GM10248 (cell line): ENCODE measurements at regions of chr15 and their contacts with region 1.

Region 1: DNA sequence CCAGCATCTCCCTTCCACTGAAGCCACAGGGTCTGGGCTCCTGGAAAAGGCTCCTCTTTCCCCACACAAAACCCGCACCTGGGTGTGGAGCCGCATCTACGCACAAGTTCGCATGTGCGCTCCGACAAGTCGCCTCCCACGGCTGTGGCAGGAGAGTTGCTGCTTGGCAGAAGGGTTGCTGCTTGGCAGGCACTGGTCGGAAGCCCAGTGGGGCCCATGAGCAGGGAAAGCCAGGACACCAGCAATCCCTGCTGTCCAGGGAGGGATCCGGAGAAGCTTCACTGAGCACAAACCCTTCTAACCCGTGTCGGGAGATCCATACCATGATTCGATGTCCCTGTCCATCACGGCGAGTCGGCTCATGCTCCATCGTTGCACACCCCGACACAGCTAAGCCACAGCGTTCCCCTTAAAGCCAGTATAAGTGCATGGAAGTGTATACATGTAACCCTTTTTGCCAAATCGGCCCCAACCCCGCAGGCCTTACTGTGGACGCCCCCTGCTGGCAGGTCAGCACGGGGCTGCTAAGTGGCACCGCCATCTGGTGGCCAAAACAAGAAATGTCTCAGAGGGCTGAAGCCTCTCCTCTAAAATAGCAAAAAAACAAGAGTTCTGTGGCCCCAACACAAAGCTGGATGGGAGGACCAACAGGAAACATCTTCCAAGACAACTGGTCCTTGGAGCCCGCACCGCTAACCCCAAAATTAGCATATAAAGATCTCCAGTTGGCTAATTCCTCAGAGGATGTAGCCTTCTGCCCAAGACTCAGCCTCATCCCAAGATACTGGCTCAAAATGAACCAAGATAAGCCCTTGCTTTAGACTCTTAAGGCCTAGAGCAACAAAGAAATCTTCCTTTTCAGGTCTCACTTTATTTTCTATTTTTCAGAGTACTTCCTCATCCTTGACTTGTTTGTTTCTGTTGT is 8.3 kb downstream of the ANKRD63 start:
- DNase-seq: peak; percentile 86
- CTCF ChIP-seq: peak; percentile 100

Region 2: DNA sequence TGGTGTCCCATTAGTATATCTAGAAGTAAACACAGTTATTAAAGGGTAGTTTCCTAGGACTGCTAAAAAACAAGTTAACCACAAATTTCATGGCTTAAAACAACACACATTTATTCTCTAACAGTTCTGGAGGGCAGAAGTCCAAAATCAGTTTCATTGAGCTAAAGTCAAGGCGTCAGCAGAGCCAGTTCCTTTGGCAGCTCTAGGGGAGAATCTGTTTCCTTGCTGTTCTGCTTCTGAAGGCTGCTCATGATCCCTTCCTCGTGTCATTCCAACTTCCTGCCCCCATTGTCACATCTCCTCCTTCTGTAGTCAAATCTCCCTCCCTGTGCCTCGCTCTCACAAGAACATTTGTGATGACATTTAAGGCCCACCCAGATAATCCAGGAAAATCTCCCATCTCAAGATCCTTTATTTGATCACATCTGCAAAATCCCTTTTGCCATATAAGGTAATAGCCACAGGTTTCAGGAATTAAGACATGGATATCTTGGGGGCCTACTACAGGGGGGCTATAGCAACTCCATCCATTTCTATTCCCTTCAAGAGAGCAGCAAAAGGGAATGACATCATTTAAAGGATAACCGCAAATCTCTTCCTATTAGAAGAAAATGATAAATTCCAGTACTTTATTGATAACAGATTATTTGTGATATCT is 404.6 kb before region 1 on chr15:
- CTCF ChIA-PET with region 1: no interaction called
- POLR2A ChIA-PET with region 1: no interaction called
- DNase-seq: no peak
- CTCF ChIP-seq: no peak

Region 3: GRCh38 chr15:40029979-40030893 is 244.4 kb before region 1 on chr15:
- CTCF ChIA-PET with region 1: interaction called, 21 read pairs
- POLR2A ChIA-PET with region 1: no interaction called
- DNase-seq: no peak
- CTCF ChIP-seq: peak; percentile 45

Region 4: DNA sequence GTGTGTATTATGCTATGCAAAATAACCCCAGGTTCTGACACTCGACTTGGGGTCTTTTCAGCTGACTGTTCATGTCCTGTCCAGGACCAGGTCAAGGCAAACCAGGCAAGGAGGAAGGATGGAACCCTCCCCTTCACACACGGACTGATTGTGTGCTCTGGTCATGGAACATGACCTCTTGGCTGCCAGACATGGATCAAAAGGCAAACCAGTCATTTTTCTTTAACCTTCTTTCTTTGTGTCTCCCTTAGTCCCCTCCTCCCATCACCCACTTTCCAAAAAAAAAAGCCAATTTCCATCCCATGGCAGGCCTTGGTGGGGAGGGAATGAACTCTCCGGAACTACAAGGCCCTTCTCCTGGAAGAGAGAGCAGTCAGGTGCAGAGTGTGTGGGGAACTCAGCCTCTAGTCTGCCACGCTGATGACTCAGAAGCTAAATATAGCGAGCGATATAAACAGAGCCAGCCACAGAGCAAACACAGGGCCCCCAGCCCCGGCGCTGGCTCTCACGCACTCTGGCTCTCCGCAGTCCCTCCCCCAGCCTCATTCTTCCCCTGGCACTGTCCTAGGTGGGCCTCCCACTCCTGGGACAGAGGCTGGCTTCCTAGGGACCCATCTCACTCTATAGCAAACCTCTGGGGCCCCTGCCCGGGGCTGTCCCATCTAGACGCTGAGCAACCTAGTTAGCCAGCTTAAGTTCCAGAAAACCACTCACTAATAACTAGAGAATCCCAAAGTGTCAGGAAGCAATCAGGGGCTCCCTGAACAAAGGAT is 175.9 kb before region 1 on chr15:
- CTCF ChIA-PET with region 1: interaction called, 11 read pairs
- POLR2A ChIA-PET with region 1: no interaction called
- DNase-seq: peak; percentile 88
- CTCF ChIP-seq: no peak

Region 5: DNA sequence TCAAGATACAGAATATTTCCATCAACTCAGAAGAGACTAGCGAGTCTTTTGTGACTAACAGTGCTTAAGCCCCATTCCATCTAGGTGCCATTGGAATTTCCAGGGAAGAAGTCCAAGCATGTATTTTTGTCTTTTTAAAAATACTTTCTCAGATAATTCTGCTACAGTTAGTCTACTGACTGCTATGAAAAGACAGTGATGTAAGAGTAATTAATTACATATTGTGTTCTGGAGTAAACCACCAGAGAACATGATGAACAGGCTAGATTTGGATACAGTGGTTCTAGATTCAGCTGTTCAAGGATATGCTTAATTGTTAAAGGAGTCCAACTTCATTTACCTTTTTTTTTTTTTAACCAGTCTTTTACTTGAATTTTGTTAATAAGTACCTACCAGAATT is 70.5 kb before region 1 on chr15:
- CTCF ChIA-PET with region 1: interaction called, 36 read pairs
- POLR2A ChIA-PET with region 1: no interaction called
- DNase-seq: no peak
- CTCF ChIP-seq: no peak

Region 6: DNA sequence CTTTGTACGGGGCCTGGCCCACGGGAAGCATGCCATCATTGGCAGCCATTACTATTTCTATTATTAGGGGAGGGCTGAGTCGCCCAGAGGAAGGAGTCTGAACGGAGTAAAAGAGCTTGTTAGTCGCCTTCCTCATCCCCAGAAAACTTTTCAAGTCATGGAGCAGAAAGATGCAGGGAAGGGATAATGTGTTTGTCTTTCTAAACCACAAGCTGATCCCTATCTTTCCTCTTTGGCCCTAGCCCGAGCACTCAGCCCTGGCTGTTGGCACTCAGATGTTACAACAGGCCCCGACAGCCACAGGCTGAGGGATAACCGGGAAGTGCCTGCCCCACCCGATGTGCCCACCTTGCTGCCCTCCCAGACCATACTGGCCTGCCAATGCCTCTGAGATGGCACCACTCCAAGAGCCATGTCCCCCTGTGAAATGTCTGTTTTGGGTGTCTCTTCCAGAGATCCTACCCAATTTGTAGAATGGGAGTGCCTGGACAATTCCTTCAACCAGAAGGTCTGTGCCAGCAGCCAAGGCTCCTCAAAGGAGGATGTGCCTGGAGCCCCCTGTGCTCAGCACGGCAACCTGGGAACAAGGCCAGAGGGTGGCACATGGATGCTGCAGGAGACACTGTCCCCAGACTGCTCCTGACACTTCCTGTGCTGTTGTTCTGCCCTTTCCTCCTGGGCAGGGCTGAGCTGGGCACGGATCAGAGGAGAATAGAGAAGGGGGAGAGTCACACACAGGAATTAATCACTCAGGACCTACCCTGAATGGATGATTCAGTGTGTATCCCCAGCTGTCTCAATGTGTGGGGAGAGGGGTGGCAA is 24.9 kb before region 1 on chr15:
- CTCF ChIA-PET with region 1: interaction called, 308 read pairs
- POLR2A ChIA-PET with region 1: no interaction called
- DNase-seq: no peak
- CTCF ChIP-seq: no peak

Region 7: GRCh38 chr15:40323239-40323952 is 48.8 kb after region 1 on chr15 and contains the start of gene INAFM2:
- CTCF ChIA-PET with region 1: interaction called, 405 read pairs
- POLR2A ChIA-PET with region 1: no interaction called
- DNase-seq: peak; percentile 96
- CTCF ChIP-seq: peak; percentile 40

Region 8: DNA sequence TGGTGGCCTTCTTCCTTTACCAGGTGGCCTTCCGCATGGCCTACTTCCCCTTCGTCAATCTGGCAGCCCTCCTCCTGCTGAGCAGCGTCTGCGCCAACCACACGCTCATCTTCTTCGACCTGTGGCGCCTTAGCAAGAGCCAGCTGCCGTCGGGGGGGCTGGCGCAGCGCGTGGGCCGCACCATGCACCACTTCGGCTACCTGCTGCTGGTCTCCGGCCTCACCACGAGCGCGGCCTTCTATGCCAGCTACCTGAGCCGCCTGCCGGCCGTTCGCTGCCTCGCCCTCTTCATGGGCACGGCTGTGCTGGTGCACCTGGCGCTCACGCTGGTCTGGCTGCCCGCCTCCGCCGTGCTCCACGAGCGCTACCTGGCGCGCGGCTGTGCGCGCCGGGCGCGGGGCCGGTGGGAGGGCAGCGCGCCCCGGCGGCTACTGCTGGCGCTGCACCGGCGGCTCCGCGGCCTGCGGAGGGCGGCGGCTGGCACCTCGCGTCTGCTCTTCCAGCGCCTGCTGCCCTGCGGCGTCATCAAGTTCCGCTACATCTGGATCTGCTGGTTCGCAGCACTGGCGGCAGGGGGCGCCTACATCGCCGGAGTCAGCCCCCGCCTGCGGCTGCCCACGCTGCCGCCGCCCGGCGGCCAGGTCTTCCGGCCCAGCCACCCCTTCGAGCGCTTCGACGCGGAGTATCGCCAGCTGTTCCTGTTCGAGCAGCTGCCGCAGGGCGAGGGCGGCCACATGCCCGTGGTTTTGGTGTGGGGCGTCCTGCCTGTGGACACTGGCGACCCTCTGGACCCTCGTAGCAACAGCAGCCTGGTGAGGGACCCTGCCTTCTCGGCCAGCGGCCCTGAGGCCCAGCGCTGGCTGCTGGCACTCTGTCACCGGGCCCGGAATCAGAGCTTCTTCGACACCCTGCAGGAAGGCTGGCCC is 93.3 kb after region 1 on chr15:
- CTCF ChIA-PET with region 1: interaction called, 10 read pairs
- POLR2A ChIA-PET with region 1: no interaction called
- DNase-seq: peak; percentile 92
- CTCF ChIP-seq: peak; percentile 88